ENCODE measurements at regions of chr1 and their contacts with region 1.

Region 1: GRCh38 chr1:53945433-53946251 is at the start of gene IFT25:
- DNase-seq: peak; percentile 96 to 100 (median 99)
- ATAC-seq: peak; percentile 92
- H3K4me3 ChIP-seq: peak within 1 kb of the TSS; percentile 70
- H3K4me3 Mint-ChIP-seq: peak within 1 kb of the TSS; percentile 91 to 97 (median 96)
- H3K27ac ChIP-seq: peak within 1 kb of the TSS; percentile 83
- H3K27ac Mint-ChIP-seq: peak within 1 kb of the TSS; percentile 83 to 96 (median 93)
- H3K4me1 ChIP-seq: peaks cover 17 to 30% of the 10 kb centered on the region in 2 donors
- H3K4me1 Mint-ChIP-seq: peaks cover 33 to 64% (median 56%) of the 10 kb centered on the region in 7 donors
- H3K27me3 ChIP-seq: no peaks in the 10 kb centered on the region
- H3K27me3 Mint-ChIP-seq: no peaks in the 10 kb centered on the region
- total RNA-seq, gene IFT25: 17.5 to 59.9 (median 41.3) TPM

Region 2: DNA sequence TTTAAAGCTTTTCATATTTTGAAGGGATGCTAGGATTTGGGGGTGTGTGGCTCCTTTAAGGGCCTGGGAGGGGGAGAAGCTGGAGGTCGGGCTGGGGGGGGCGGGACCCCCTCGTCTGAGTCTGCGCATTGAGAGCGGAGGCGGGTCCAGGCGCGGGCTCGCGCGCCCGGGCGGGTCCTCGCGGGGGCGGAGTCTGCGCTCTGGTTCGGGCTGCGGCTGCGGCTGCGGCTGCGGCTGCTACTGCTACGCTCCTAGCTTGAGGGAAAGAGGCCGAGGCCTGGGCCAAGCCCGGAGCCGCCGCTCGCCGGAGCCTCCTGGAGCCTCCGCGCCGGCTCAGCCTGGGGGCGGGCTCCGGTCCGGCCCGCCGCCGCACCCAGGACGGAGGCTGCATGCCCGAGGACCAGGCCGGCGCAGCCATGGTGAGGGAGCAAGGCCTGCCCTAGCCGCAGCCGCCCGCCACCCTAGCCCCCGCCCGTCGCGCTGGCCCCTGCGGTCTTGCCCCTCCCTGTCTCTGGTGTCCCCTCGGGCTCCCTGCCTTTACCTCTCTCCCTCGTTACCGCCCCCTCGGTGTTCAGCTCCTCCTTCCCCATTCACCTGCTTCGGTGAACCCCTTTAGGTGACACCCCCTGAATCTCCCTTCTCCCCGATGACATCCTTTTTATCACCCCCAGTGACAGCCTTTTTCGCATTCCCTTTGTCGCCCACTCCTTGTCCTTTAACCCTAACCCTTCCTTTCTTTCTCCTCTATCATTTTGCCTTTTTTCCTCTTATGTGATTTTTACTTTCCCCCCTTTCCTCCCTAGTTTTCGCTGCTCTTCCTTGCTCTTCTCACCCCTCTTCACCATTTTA is 1219.2 kb before region 1 on chr1 and contains the start of gene ZYG11B:
- CTCF ChIA-PET with region 1: no interaction called
- POLR2A ChIA-PET with region 1: no interaction called
- intact Hi-C with region 1: loop called in 1 of 2 experiments (anchors 10 kb)
- DNase-seq: peak; percentile 80 to 93 (median 88)
- ATAC-seq: peak; percentile 97
- H3K4me3 ChIP-seq: peak within 1 kb of the TSS; percentile 85
- H3K4me3 Mint-ChIP-seq: peak within 1 kb of the TSS; percentile 88 to 99 (median 97)
- H3K27ac ChIP-seq: peak within 1 kb of the TSS; percentile 89
- H3K27ac Mint-ChIP-seq: peak within 1 kb of the TSS; percentile 72 to 97 (median 90)
- H3K4me1 ChIP-seq: peaks cover 12 to 19% of the 10 kb centered on the region in 2 donors
- H3K4me1 Mint-ChIP-seq: peaks cover 24 to 60% (median 54%) of the 10 kb centered on the region in 7 donors
- H3K27me3 ChIP-seq: no peaks in the 10 kb centered on the region
- H3K27me3 Mint-ChIP-seq: peaks cover 0 to 6% (median 0%) of the 10 kb centered on the region in 5 donors
- total RNA-seq, gene ZYG11B: 14.9 to 26.8 (median 17.9) TPM

Region 3: GRCh38 chr1:53326088-53326597 is 619.5 kb before region 1 on chr1:
- CTCF ChIA-PET with region 1: no interaction called
- POLR2A ChIA-PET with region 1: no interaction called
- intact Hi-C with region 1: loop called (anchors 2 kb)
- DNase-seq: peak; percentile 70 to 96 (median 79)
- ATAC-seq: peak; percentile 93
- H3K4me3 ChIP-seq: peak overlapping the region; percentile 88
- H3K4me3 Mint-ChIP-seq: peak overlapping the region; percentile 89 to 98 (median 94)
- H3K27ac ChIP-seq: peak overlapping the region; percentile 56
- H3K27ac Mint-ChIP-seq: peak overlapping the region; percentile 15 to 96 (median 73)
- H3K4me1 ChIP-seq: peaks cover 5 to 14% of the 10 kb centered on the region in 2 donors
- H3K4me1 Mint-ChIP-seq: peaks cover 6 to 52% (median 12%) of the 10 kb centered on the region in 7 donors
- H3K27me3 ChIP-seq: no peaks in the 10 kb centered on the region
- H3K27me3 Mint-ChIP-seq: no peaks in the 10 kb centered on the region

Region 4: DNA sequence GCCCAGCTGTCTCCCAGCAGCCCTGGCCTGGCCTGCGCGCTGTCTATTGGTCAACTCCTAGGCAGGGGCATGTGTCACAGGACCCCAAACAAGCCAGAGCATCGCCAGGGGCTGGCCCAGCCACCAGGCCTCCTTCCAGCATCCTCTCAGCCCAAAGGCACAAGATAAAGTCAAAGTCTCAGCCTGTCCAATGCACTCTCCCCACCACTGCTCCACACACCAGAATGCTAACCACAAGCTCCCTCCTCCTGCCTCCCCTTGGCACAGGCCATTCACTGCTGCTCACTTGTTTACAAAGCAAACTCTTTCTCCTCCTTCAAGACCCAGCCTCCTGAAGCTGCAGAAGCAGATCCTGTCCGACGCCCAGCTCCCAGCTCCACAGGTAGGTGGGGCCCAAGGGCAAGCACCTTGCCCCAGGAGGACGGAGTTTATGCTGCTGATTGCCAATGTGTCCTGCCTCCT is 353.1 kb before region 1 on chr1:
- CTCF ChIA-PET with region 1: no interaction called
- POLR2A ChIA-PET with region 1: no interaction called
- intact Hi-C with region 1: no loop called
- DNase-seq: no peak
- ATAC-seq: no peak
- H3K4me3 ChIP-seq: no peak overlapping the region
- H3K4me3 Mint-ChIP-seq: no peak overlapping the region
- H3K27ac ChIP-seq: no peak overlapping the region
- H3K27ac Mint-ChIP-seq: no peak overlapping the region
- H3K4me1 ChIP-seq: no peaks in the 10 kb centered on the region
- H3K4me1 Mint-ChIP-seq: no peaks in the 10 kb centered on the region
- H3K27me3 ChIP-seq: no peaks in the 10 kb centered on the region
- H3K27me3 Mint-ChIP-seq: peaks cover 0 to 9% (median 0%) of the 10 kb centered on the region in 5 donors

Region 5: DNA sequence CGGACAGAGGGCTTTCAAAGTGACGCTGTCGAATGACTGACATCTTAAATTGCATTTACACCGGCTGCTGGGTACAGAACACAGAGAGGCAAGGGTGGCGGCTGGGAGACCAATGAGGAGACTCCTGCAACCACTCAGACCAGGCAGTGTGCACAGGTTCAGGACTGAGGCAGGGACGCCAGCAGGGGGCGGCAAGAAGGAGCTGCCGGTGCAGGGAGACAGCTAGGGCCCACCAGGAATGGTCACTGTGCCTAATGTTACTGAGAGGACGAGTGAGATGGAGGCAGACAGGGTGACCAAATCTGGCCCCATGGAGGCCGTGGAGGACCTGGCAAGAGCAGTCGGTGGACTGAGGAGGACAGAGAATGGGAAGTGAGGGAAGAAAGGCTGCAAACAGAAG is 230.2 kb before region 1 on chr1:
- CTCF ChIA-PET with region 1: no interaction called
- POLR2A ChIA-PET with region 1: no interaction called
- intact Hi-C with region 1: no loop called
- DNase-seq: no peak
- ATAC-seq: no peak
- H3K4me3 ChIP-seq: no peak overlapping the region
- H3K4me3 Mint-ChIP-seq: no peak overlapping the region
- H3K27ac ChIP-seq: no peak overlapping the region
- H3K27ac Mint-ChIP-seq: no peak overlapping the region
- H3K4me1 ChIP-seq: no peaks in the 10 kb centered on the region
- H3K4me1 Mint-ChIP-seq: peaks cover 0 to 1% (median 0%) of the 10 kb centered on the region in 7 donors
- H3K27me3 ChIP-seq: no peaks in the 10 kb centered on the region
- H3K27me3 Mint-ChIP-seq: peaks cover 5 to 12% (median 7%) of the 10 kb centered on the region in 5 donors

Region 6: GRCh38 chr1:53878492-53879105 is 67.0 kb before region 1 on chr1:
- CTCF ChIA-PET with region 1: interaction called, 3 read pairs
- POLR2A ChIA-PET with region 1: interaction called, 3 read pairs
- intact Hi-C with region 1: loop called (anchors 1 kb)
- DNase-seq: peak in 2 of 9 donors; percentile 10 to 11
- ATAC-seq: no peak
- H3K4me3 ChIP-seq: no peak overlapping the region
- H3K4me3 Mint-ChIP-seq: no peak overlapping the region
- H3K27ac ChIP-seq: no peak overlapping the region
- H3K27ac Mint-ChIP-seq: no peak overlapping the region
- H3K4me1 ChIP-seq: no peaks in the 10 kb centered on the region
- H3K4me1 Mint-ChIP-seq: peaks cover 0 to 18% (median 8%) of the 10 kb centered on the region in 7 donors
- H3K27me3 ChIP-seq: no peaks in the 10 kb centered on the region
- H3K27me3 Mint-ChIP-seq: no peaks in the 10 kb centered on the region

Region 7: DNA sequence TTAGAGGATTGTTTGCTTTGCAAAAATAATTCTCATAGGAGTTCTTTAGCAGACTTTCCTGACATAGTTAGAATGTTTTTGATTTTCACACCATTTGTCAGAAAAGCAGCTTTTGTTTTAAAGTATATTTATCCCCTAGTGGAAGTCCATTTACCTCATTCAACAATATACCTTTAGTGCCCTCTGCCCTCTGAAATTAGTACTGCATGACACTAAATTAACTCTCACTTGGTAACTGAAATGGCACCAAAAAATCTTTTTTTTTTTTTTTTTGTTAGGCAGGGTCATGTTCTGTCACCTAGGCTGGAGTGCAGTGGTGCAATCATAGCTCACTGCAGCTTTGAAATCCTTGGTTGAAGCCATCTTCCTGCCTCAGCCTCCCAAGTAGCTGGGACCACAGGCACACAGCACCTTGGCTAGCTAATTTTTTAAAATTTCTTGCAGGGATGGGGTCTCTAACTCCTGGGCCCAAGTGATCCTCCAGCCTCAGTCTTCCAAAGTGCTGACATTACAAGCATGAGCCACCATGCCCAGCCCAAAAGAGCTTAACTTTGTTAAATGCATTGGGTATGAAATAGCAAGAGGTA is 14.1 kb after region 1 on chr1:
- CTCF ChIA-PET with region 1: interaction called, 12 read pairs
- POLR2A ChIA-PET with region 1: interaction called, 4 read pairs
- intact Hi-C with region 1: loop called in 1 of 2 experiments (anchors 1 kb)
- DNase-seq: peak in 7 of 9 donors; percentile 33 to 62 (median 46)
- ATAC-seq: peak; percentile 86
- H3K4me3 ChIP-seq: no peak overlapping the region
- H3K4me3 Mint-ChIP-seq: no peak overlapping the region
- H3K27ac ChIP-seq: no peak overlapping the region
- H3K27ac Mint-ChIP-seq: no peak overlapping the region
- H3K4me1 ChIP-seq: no peaks in the 10 kb centered on the region
- H3K4me1 Mint-ChIP-seq: peaks cover 4 to 14% (median 5%) of the 10 kb centered on the region in 7 donors
- H3K27me3 ChIP-seq: no peaks in the 10 kb centered on the region
- H3K27me3 Mint-ChIP-seq: no peaks in the 10 kb centered on the region

Region 8: DNA sequence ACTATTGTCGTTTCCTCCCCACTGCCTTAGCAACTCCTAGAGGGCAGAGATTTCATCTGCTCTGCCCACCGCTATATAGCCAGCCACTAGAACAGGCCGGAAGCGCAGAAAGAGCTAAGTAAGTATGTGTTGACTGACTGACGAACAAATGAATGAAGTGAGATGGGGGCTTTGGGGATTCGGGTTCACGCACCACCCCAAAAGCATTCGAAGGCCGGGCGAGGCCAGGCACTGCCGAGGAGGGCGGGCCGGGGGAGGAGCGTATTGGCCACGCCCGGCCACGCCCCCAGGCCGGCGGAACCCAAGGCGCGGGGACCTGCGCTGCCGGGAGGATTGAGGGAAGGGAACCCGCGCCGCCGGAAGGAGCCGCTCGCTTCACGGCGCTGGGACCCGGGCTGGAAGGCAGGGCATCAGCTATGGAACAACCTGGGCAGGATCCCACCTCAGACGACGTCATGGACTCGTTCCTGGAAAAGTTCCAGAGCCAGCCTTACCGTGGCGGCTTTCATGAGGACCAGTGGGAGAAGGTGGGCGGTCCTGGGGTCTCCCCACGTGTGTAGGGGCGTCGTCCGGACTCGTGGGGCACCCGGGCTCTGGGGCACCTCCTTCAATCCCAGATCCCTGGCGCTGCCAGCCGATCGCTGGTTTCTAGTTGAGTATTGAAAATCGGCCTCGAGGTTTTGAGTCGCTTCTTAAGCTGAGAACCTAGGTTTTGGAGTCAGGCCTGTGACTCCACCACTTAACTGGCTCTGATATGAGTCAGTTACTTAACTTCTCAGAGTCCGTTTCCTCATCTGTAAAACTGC is 770.1 kb after region 1 on chr1 and contains the start of gene TTC4:
- CTCF ChIA-PET with region 1: no interaction called
- POLR2A ChIA-PET with region 1: no interaction called
- intact Hi-C with region 1: loop called (anchors 1 to 5 kb)
- DNase-seq: peak; percentile 71 to 92 (median 85)
- ATAC-seq: peak; percentile 99
- H3K4me3 ChIP-seq: peak within 1 kb of the TSS; percentile 86
- H3K4me3 Mint-ChIP-seq: peak within 1 kb of the TSS; percentile 81 to 96 (median 88)
- H3K27ac ChIP-seq: peak within 1 kb of the TSS; percentile 84
- H3K27ac Mint-ChIP-seq: peak within 1 kb of the TSS; percentile 58 to 94 (median 91)
- H3K4me1 ChIP-seq: peaks cover 14 to 15% of the 10 kb centered on the region in 2 donors
- H3K4me1 Mint-ChIP-seq: peaks cover 15 to 42% (median 34%) of the 10 kb centered on the region in 7 donors
- H3K27me3 ChIP-seq: no peaks in the 10 kb centered on the region
- H3K27me3 Mint-ChIP-seq: no peaks in the 10 kb centered on the region
- total RNA-seq, gene TTC4: 11.6 to 25.8 (median 21.4) TPM